GM12878 (cell line): ENCODE measurements at regions of chr13 and their contacts with region 1.

Region 1: DNA sequence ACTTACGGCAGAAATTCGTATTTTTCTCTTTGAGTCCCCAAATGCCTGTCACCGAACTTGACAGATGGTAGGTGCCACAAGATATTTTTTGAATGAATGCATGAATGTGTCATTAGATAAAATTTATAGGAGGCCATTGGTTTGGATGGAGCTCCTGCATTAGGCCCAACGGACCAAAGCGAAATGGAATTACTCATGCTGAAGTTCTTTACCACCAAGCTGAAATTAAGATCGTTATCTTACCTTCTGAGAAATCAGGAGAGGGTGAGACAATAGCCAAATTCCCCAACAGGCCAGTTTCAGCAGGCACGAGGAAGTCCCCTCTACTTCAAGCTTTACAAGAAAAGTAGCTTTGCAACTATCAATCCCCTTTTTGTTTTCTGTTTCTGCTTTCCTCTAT is 452.5 kb upstream of the ARGLU1 start:
- DNase-seq: no peak
- ATAC-seq: no peak; the same call in 2 of the 3 replicates
- H3K4me3 ChIP-seq: no peak overlapping the region
- H3K27ac ChIP-seq: no peak overlapping the region
- H3K4me1 ChIP-seq: no peaks in the 10 kb centered on the region
- H3K27me3 ChIP-seq: no peaks in the 10 kb centered on the region
- CTCF ChIP-seq: no peak
- EP300 ChIP-seq: no peak
- POLR2A ChIP-seq: no peak
- RAD21 ChIP-seq: no peak

Region 2: GRCh38 chr13:106996867-106997618 is 23.4 kb before region 1 on chr13:
- CTCF ChIA-PET with region 1: no interaction called
- POLR2A ChIA-PET with region 1: interaction called, 7 read pairs
- RAD21 ChIA-PET with region 1: interaction called, 8 read pairs
- SMC1A ChIA-PET with region 1: interaction called, 13 read pairs
- in situ Hi-C with region 1: no loop called
- intact Hi-C with region 1: no loop called
- DNase-seq: no peak
- ATAC-seq: no peak
- H3K4me3 ChIP-seq: no peak overlapping the region
- H3K27ac ChIP-seq: no peak overlapping the region
- H3K4me1 ChIP-seq: no peaks in the 10 kb centered on the region
- H3K27me3 ChIP-seq: no peaks in the 10 kb centered on the region
- CTCF ChIP-seq: no peak
- EP300 ChIP-seq: no peak
- POLR2A ChIP-seq: no peak
- RAD21 ChIP-seq: no peak

Region 3: DNA sequence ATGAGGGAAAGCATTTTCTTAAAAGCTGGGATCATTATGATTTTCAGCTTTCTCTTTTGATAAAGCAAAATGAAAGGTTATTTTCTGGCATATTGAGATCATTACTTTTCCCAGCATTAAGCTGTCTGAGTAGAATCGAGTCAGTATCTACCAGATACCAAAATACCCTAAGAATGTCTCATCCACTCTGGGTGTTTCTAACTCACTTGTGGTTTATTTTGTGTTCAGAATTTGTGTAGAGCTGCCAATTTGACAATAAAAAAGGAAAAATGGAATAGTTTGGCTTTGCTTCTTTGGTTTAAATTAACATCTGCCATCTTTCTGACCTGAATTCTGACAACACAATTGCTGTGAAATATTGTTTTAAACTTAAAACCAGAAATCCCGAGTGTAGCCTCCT is 13.7 kb before region 1 on chr13:
- CTCF ChIA-PET with region 1: no interaction called
- POLR2A ChIA-PET with region 1: interaction called, 3 read pairs
- RAD21 ChIA-PET with region 1: interaction called, 5 read pairs
- SMC1A ChIA-PET with region 1: interaction called, 11 read pairs
- in situ Hi-C with region 1: no loop called
- intact Hi-C with region 1: no loop called
- DNase-seq: no peak
- ATAC-seq: no peak
- H3K4me3 ChIP-seq: no peak overlapping the region
- H3K27ac ChIP-seq: no peak overlapping the region
- H3K4me1 ChIP-seq: no peaks in the 10 kb centered on the region
- H3K27me3 ChIP-seq: no peaks in the 10 kb centered on the region
- CTCF ChIP-seq: no peak
- EP300 ChIP-seq: no peak
- POLR2A ChIP-seq: no peak
- RAD21 ChIP-seq: no peak